ENCODE measurements at regions of chr2 and their contacts with region 1.

Region 1: GRCh38 chr2:127649684-127650040 is 3.7 kb downstream of the GPR17 start:
- DNase-seq: peak in 9 of 10 donors; percentile 33 to 84 (median 78)
- H3K4me3 ChIP-seq: peak overlapping the region in 9 of 59 donors; percentile 9 to 37 (median 21)
- H3K27ac ChIP-seq: peak overlapping the region in 56 of 59 donors; percentile 7 to 98 (median 92)
- H3K27me3 ChIP-seq: no peaks in the 10 kb centered on the region
- CTCF ChIP-seq: peak; percentile 73 to 99 (median 86)

Region 2: GRCh38 chr2:127591221-127591923 is 58.3 kb before region 1 on chr2:
- intact Hi-C with region 1: loop called (anchors 2 kb)
- DNase-seq: peak in 6 of 10 donors; percentile 34 to 75 (median 56)
- H3K4me3 ChIP-seq: no peak overlapping the region
- H3K27ac ChIP-seq: no peak overlapping the region
- H3K27me3 ChIP-seq: no peaks in the 10 kb centered on the region
- CTCF ChIP-seq: peak; percentile 30 to 94 (median 84)

Region 3: DNA sequence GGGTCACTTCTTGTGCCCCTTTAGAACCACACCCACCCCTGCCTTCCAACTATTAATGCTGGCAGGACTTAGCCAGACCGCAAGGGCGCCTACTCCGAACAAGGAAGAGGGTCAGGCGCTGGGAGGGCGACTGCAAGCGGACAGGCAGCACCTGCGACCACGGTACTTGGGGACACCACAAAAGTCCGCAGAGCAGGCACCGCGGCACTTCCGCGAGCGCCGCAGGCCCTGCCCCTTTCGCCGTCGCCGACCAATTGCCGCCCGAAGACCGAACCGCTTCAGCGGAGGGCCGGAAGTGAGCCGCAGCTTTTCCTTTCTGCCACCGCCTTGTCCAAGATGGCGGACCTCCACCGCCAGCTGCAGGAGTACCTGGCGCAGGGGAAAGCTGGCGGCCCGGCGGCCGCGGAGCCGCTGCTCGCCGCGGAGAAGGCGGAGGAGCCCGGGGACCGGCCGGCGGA is 51.6 kb after region 1 on chr2 and contains the start of gene SFT2D3:
- intact Hi-C with region 1: loop called (anchors 5 kb)
- DNase-seq: peak; percentile 81 to 95 (median 91)
- H3K4me3 ChIP-seq: peak within 1 kb of the TSS; percentile 55 to 96 (median 74)
- H3K27ac ChIP-seq: peak within 1 kb of the TSS; percentile 78 to 99 (median 94)
- H3K27me3 ChIP-seq: no peaks in the 10 kb centered on the region
- CTCF ChIP-seq: peak in 19 of 56 donors; percentile 11 to 49 (median 24)
- total RNA-seq, gene SFT2D3: 1.3 to 5.3 (median 3.1) TPM